Endothelial cell of umbilical vein (primary cell): ENCODE measurements at regions of chr12 and their contacts with region 1.

Region 1: DNA sequence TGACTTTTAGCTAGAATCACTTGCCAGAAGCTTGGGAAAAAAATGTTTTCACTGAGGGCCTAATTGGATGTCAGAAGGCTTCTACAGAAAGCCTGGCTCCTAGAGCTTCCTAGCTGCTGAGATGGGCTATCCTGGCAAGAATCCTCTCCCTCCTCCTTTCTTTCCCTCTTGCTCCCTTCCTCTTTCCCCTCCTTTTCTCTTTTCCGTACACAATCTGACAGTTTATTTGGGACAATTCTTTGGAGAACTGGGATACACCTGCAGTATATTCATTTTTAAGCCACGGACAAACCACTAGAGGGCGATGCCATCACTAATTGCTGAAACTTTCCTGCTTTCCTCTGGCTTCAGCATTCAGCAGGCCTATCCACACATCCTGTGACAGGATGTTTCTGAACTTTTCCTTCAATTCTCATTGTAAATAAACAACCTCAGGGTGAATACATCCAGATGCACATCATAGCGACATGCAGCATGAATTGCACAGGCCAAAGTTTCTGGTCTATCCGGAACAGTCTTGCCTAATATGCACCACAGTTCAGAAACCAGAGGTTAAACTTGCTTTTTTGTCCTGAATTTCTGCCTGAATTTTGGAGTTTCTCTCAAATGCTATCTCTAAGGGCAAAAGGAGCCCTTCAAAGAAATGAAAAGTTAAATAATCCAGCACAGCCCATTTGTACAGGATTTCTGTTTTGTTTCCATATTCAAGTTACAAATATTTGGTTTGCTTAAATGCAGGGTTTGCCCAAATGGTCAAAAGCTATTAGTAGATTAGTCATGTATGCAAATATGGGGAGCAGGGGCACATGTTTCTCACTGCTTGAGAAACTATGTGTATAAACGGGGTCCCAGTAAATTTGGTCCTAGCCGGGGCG is 142.8 kb downstream of the PAWR start:
- DNase-seq: peak; percentile 95
- H3K4me3 ChIP-seq: peak overlapping the region in 1 of 3 experiments; percentile 37
- H3K27ac ChIP-seq: peak overlapping the region; percentile 99
- H3K4me1 ChIP-seq: peaks cover 55% of the 10 kb centered on the region
- H3K27me3 ChIP-seq: no peaks in the 10 kb centered on the region
- CTCF ChIP-seq: peak; percentile 58 to 74
- POLR2A ChIP-seq: peak; percentile 69

Region 2: DNA sequence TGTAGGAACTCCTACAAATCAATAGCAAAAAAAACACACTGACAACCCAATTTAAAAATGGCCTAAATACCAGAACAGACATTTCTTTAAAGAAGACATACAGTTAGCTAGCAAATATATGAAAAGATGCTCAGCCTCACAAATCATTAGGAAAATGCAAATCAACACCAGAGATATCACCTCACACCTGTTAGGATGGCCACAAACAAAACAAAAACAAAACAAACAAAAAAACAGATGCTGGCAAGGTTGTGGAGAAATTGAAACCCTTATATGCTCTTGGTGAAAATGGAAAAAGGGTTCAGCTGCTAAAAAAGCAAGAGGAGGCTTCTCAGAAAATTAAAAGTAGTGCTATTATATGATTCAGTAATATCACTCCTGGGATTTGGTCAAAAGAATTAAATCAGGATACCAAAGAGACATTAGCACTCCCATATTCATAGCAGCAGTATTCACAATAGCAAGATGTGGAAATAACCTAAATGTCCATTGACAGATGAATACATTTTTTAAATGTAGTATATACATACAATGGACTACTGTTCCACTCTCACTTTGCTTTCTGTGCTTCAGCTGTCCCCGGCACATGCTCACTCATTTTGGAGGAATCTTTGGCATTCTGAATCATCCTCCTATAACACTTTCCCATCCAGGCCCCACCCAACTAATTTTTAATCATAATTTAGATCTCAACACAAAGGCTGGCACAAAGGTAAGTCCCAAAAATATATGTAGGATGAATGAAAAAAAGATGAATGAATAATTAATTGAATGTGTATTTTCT is 584.3 kb before region 1 on chr12:
- CTCF ChIA-PET with region 1: no interaction called
- POLR2A ChIA-PET with region 1: no interaction called
- dilution Hi-C with region 1: no loop called
- intact Hi-C with region 1: no loop called
- DNase-seq: no peak
- H3K4me3 ChIP-seq: no peak overlapping the region
- H3K27ac ChIP-seq: no peak overlapping the region
- H3K4me1 ChIP-seq: no peaks in the 10 kb centered on the region
- H3K27me3 ChIP-seq: no peaks in the 10 kb centered on the region
- CTCF ChIP-seq: no peak
- POLR2A ChIP-seq: no peak

Region 3: GRCh38 chr12:79451978-79452377 is 96.0 kb before region 1 on chr12:
- CTCF ChIA-PET with region 1: interaction called, 6 read pairs
- POLR2A ChIA-PET with region 1: interaction called, 3 read pairs
- dilution Hi-C with region 1: no loop called
- intact Hi-C with region 1: loop called (anchors 1 kb)
- DNase-seq: peak; percentile 99
- H3K4me3 ChIP-seq: no peak overlapping the region
- H3K27ac ChIP-seq: peak overlapping the region; percentile 79
- H3K4me1 ChIP-seq: peaks cover 44% of the 10 kb centered on the region
- H3K27me3 ChIP-seq: no peaks in the 10 kb centered on the region
- CTCF ChIP-seq: no peak
- POLR2A ChIP-seq: no peak

Region 4: DNA sequence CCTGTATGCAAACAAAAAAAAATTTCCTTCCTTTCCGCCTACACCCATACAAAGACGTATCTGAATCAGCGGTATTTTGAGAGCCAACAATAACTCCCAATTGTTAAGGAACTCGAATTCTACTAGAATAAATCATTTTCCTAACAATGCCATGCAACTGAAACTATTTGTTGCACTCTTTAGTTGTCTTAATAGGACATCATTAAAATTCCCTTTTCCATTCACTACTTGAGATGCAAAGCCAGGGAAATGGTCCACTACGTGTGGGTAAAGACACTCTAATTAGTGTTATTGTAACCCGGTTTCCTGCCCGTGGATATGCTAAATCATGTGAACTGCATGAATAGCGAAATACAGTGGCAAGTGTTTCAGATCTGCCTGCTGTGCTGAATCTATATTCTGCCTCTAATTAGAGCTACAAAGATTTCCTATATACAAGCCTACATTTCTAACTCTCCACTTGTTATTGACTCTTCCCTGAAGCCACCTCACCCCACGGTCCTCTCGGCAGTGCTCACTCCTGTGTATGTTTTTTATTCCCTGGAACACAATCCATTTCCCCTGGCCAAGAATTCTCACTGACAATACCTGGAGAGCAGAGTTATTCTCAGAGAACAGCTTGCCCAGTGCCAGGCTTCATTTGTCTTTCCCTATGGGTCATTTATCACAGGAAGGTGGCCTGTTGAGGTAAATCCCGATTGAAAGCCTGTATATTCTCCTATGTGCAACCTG is 25.5 kb before region 1 on chr12:
- CTCF ChIA-PET with region 1: interaction called, 3 read pairs
- POLR2A ChIA-PET with region 1: no interaction called
- dilution Hi-C with region 1: no loop called
- intact Hi-C with region 1: loop called (anchors 1 kb)
- DNase-seq: peak; percentile 82
- H3K4me3 ChIP-seq: peak overlapping the region in 1 of 3 experiments; percentile 37
- H3K27ac ChIP-seq: peak overlapping the region; percentile 62
- H3K4me1 ChIP-seq: peaks cover 32% of the 10 kb centered on the region
- H3K27me3 ChIP-seq: no peaks in the 10 kb centered on the region
- CTCF ChIP-seq: no peak
- POLR2A ChIP-seq: no peak

Region 5: DNA sequence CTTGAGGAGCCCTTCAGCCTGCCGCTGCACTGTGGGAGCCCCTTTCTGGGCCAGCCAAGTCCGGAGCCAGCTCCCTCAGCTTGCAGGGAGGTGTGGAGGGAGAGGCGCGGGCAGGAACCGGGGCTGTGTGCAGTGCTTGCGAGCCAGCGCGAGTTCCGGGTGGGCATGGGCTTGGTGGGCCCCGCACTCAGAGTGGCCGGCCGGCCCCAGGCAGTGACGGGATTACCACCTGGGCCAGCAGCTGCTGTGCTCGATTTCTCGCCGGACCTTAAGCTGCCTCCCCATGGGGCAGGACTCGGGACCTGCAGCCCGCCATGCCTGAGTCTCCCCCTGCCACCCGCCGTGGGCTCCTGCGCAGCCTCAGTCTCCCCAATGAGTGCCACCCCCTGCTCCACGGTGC is 25.8 kb after region 1 on chr12:
- CTCF ChIA-PET with region 1: no interaction called
- POLR2A ChIA-PET with region 1: no interaction called
- dilution Hi-C with region 1: no loop called
- intact Hi-C with region 1: no loop called
- DNase-seq: no peak
- H3K4me3 ChIP-seq: no peak overlapping the region
- H3K27ac ChIP-seq: no peak overlapping the region
- H3K4me1 ChIP-seq: no peaks in the 10 kb centered on the region
- H3K27me3 ChIP-seq: no peaks in the 10 kb centered on the region
- CTCF ChIP-seq: no peak
- POLR2A ChIP-seq: no peak

Region 6: GRCh38 chr12:79690638-79691493 is 142.9 kb after region 1 on chr12 and contains the start of gene PAWR:
- CTCF ChIA-PET with region 1: interaction called, 4 read pairs
- POLR2A ChIA-PET with region 1: no interaction called
- dilution Hi-C with region 1: no loop called
- intact Hi-C with region 1: loop called (anchors 1 kb)
- DNase-seq: peak; percentile 83
- H3K4me3 ChIP-seq: peak within 1 kb of the TSS; percentile 85 to 96 (median 88)
- H3K27ac ChIP-seq: peak within 1 kb of the TSS; percentile 85
- H3K4me1 ChIP-seq: peaks cover 28% of the 10 kb centered on the region
- H3K27me3 ChIP-seq: no peaks in the 10 kb centered on the region
- CTCF ChIP-seq: peak in 1 of 2 donors; percentile 37
- POLR2A ChIP-seq: peak; percentile 21
- total RNA-seq, gene PAWR: 154 and 175 TPM in 2 replicates

Region 7: GRCh38 chr12:79935021-79935623 is 387.1 kb after region 1 on chr12 and contains the start of gene PPP1R12A:
- CTCF ChIA-PET with region 1: no interaction called
- POLR2A ChIA-PET with region 1: no interaction called
- dilution Hi-C with region 1: no loop called
- intact Hi-C with region 1: loop called (anchors 2 kb)
- DNase-seq: peak; percentile 99
- H3K4me3 ChIP-seq: peak within 1 kb of the TSS; percentile 69 to 97 (median 84)
- H3K27ac ChIP-seq: peak within 1 kb of the TSS; percentile 82
- H3K4me1 ChIP-seq: peaks cover 22% of the 10 kb centered on the region
- H3K27me3 ChIP-seq: no peaks in the 10 kb centered on the region
- CTCF ChIP-seq: peak in 1 of 2 donors; percentile 14
- POLR2A ChIP-seq: peak; percentile 92
- total RNA-seq, gene PPP1R12A: 83.9 and 86.8 TPM in 2 replicates

Region 8: DNA sequence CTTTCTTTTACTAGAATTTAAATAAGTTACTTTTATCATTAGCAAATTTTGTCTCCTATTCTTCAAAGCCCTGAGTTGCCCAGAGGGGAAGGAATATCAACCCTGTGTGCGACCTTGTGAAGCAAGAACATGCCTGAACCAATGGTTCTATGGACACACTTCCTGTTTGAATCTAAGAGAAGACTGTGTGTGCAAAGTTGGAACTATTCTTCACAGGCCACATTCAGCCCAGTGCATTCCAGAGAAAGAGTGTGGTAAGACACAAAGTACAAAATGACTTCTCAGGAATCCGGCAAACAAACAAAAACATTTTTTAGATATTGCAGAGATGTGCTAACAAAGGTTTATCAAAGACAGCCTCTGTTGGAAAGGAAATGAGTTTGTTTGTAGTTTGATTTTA is 805.3 kb after region 1 on chr12:
- CTCF ChIA-PET with region 1: no interaction called
- POLR2A ChIA-PET with region 1: no interaction called
- dilution Hi-C with region 1: no loop called
- intact Hi-C with region 1: loop called (anchors 1 kb)
- DNase-seq: peak; percentile 49
- H3K4me3 ChIP-seq: no peak overlapping the region
- H3K27ac ChIP-seq: peak overlapping the region; percentile 58
- H3K4me1 ChIP-seq: peaks cover 51% of the 10 kb centered on the region
- H3K27me3 ChIP-seq: no peaks in the 10 kb centered on the region
- CTCF ChIP-seq: no peak
- POLR2A ChIP-seq: no peak